ENCODE measurements at regions of chr2 and their contacts with region 1.

Region 1: DNA sequence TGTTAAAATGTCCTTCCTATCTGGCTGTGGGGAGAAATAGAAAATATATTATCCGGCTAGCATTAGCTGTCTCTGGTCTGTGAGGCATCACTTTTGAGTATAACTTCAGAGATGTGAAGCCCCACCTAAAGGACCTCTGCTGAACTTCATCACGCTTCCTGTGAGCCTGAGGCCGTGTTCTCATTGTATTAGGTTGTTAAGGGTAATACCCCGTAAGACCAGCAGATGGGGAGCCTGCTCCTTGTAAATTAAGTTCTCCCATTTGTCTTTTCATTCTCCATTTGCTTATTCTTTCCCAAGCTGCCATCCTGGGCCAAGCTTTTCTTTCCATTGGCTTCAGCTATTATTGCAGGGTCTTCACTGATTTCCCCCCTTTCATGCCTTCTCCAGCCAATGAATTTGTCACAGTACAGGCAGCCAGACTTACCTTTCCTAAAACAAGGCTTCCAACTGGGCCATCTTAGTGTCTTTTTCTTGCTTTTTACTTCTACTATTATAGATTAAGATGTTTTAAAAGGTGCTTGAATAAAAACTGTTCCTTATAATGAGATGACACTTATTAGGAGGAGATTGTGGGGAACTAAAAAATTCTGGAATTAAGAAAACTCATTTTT is 12.4 kb downstream of the NIF3L1 start:
- DNase-seq: peak in 38 of 42 donors; percentile 13 to 81 (median 54)

Region 2: DNA sequence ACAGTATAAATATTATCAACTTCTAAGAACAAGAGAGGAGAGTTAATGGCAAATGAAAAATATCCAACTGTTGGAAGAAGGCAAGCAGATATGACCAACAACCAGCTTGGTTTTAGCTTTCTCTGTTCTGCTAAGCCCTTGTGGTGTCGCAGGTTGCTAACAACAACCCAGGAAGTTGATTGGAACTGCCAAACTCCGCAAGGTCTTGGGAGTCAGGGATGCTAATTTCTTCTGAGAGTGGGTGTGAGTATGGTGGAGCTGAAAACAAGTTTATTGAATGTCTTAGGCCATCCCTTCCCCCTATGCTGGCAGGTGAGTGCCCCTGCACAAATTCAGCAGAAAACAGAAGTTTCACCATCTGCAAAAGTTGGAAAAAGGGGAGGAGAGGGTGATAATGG is 72.3 kb before region 1 on chr2:
- intact Hi-C with region 1: no loop called
- DNase-seq: no peak

Region 3: DNA sequence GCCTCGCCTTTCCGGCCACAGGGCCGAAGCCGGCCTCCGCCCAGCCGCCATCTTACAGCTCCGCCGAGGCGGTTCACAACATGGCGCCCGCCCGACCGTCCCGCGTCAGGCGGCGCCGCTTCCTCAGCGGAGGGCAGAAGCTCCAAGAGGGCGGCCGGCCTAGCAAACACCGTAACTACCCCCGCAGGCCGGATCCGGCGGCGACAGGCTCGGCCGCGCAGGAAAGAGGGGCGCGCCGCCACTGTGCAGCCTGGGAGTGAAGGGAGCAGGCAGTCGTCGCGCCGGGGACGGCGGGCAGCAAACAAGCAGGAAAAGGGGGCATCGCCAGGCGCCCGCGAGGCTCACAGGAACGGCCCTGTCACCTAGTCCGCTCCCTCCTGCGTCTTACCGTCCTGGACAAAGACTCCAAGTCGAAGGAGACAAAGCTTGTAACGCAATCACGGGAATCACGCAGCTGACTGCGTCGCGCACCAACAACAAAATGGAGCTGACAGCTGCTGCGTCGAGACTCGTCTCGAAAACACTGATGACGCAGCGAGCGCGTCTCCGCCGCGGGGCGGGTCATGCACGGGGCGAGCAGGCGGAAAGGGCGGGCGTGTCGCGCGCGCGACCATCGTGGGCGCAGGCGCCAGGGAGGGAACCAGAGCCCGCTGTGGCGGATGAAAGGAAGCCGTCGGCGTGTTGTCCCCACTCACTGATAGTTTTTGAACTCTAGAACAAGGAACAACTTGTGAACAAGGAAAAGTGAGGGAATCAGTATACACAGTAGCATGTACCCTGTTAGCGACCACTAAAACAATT is 37.2 kb before region 1 on chr2 and contains the start of gene CLK1:
- intact Hi-C with region 1: no loop called
- DNase-seq: peak; percentile 90 to 98 (median 96)

Region 4: DNA sequence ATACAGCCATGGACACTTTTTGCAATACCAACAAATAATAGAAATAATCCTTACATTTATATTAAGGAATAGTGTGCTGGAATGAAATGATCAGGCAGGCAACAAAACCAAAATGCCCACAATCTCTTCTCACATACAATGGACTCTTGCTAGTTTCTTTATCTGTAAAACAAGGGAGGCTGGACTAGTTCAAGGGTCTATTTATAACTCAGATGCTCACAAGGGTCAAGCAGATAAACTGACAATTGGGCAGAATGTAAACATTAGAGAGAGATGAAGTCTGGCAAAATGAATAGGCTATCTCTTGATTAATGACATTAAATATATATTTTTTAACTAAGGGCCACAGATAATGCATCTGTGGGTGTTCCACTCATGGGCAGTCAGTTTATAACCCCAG is 24.1 kb before region 1 on chr2:
- intact Hi-C with region 1: no loop called
- DNase-seq: no peak

Region 5: DNA sequence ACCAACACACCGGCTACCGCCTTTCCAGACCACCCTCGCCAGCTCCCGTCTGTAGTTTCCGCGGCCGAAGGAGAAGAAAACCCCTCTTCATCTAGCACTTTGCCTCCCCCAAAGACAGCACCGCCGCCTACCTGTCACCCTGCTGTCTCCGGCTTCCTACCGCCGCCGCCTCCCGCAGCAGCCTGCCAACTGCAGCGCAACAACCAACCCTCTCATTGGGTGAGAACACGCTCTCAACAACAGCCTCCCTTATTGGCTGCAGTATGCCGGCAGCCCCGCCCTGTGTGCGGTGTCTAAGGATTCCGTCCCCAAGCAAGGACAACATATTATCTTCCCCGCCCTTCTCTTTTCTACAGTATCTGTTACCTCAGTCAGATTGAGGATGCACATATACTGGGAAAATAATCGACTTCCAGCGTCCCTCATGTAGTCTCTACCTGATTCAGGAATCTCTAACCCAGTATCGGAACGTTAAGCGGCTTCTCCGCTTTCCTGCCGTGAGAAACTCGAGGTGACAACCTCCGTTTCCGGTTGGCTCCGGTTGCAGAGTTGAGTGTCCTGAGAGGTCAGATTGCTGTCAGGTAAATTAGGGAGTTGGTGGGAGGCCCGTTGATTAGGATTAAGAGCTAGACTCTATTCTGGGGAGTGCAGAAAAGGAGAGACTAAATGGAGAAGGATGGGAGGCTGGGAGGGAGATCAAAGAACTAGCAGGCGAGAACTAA is 170.1 kb after region 1 on chr2 and contains the starts of genes HYCC2 and NDUFB3:
- intact Hi-C with region 1: loop called (anchors 5 kb)
- DNase-seq: peak; percentile 84 to 97 (median 92)

Region 6: DNA sequence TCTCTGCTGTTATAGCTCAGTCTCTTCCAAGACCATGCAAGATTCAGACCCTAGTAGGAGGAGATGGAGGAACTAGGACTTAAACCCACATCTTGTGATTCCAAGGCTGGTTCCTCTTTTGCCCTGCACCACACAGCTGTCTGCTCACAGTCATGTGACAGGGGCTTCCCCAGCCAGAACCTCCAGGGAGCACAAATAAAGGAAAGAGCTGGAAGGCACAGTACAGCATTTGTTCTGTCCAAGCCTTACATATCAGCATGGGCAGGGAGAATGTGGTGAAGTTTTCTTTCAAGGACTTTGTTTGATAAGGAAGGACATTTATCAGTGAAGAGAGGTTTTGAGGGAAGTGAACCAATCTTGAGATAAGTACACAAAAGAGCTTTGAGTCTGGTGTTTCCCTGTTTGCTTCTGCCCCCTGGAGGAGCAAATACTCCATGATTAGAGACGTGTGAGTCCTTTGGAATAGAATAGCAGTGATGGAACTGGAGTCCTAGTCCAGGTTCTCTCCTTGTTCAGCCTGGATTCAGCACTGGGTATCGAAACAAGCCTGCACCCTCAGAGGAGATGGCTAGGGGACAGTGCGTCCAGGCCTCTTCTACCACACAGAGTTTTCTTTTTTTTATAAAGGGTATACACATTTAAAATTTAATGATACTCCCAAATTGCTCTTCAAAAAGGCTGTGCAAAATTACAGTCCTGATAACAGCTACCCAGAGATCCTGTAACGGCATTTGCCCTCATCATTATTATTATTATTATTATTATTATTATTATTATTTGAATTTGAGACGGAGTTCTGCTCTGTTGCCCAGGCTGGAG is 256.8 kb after region 1 on chr2:
- intact Hi-C with region 1: loop called (anchors 5 kb)
- DNase-seq: peak; percentile 36 to 90 (median 74)

Region 7: DNA sequence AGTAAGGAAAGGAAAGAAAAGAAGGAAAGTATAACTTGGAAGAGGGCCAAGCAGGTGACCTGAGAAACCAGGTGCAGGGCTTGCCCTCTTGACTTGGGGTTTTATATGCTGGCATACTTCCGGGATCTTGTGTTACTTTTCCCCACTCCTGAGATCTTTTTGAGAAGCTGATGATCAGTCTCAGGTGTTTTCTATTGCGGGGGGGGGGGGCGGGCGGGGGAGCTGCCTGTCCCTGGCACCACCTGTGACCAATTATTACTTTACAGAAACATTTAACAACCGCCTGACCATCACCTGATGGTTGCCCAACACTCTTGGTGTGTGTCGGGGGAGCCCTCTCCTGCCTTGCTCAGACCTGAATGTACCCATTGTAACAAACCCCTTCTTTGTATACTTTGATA is 274.5 kb after region 1 on chr2:
- intact Hi-C with region 1: loop called (anchors 5 kb)
- DNase-seq: no peak

Measured in head of caudate nucleus (tissue), 42 donors.